SK-N-SH (cell line): ENCODE measurements at regions of chr1 and their contacts with region 1.

Region 1: DNA sequence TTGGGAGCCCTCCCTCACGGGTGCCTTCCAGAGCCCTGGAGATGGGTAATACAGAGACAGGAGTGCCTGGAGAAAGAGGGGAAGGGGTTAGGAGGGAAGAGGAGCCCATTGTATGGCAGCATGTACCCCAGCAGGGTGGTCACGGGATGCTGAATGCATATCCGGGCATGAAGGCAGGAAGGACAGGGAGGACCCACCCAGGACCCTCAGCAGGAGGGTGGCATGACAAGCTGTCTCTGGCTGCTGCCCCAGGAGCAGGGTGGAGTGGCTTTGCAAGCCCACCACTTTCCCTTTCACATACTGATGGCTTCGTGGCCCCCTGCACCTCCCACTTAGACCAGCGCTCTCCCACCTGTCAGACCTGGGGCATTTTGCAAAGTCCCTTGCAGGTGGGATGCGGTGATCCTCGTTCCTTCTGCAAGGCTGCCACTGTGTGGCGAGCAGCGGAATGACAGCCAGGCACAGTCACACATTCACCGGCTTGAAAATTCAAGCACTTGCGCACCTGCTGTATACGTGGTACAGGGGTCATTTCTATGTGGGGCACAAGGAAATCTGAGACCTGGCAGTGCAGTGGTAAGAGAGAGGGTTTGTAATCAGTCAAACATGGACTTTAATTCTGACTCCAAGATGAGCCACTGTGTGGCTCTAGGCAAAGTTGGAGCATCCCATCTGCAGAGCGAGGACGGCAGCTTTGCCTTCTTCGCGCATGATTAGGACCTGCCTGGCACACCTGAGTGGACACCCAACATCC is 53.2 kb upstream of the TMEM51 start:
- DNase-seq: peak; percentile 81
- H3K4me3 ChIP-seq: no peak overlapping the region; a peak in 1 of 4 replicates
- H3K27ac ChIP-seq: no peak overlapping the region
- H3K4me1 ChIP-seq: peaks cover 0 to 4% of the 10 kb centered on the region in 2 experiments; a peak in 1 of 4 replicates
- H3K27me3 ChIP-seq: no peaks in the 10 kb centered on the region
- CTCF ChIP-seq: peak; percentile 88
- EP300 ChIP-seq: no peak
- RAD21 ChIP-seq: peak; percentile 92

Region 2: DNA sequence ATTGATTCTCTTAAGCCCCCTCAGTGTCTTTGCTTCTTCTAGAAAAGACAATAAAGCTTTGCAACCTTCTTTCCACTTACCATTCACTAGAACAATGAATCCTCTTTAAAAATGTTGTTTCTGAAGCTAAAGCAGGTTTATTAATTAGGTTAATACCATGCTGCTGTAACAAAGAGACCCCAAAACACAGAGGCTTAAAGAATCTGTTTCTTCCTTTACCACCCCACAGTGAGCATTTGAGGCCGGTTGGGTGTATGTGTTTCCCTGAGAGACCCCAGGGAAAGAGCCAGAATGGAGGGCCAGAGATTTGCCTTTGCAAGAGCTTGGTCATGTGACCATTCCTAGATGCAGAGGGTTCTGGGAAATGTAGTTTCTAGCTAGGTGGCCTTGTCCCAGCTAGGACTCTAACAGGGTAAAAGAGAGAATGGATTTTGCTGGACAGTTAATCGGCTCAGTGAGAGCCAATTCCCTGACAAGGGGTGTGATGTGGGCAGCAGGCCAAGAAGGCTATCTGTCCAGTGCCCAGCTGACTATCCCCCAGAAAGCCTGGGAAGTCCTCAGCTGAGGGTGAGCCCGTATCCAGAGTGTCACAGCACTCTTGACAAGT is 138.5 kb before region 1 on chr1:
- CTCF ChIA-PET with region 1: no interaction called
- POLR2A ChIA-PET with region 1: no interaction called
- DNase-seq: peak; percentile 48
- H3K4me3 ChIP-seq: no peak overlapping the region
- H3K27ac ChIP-seq: no peak overlapping the region
- H3K4me1 ChIP-seq: peaks cover 0 to 8% of the 10 kb centered on the region in 2 experiments; a peak in 1 of 4 replicates
- H3K27me3 ChIP-seq: no peaks in the 10 kb centered on the region
- CTCF ChIP-seq: no peak
- EP300 ChIP-seq: no peak
- RAD21 ChIP-seq: no peak

Region 3: DNA sequence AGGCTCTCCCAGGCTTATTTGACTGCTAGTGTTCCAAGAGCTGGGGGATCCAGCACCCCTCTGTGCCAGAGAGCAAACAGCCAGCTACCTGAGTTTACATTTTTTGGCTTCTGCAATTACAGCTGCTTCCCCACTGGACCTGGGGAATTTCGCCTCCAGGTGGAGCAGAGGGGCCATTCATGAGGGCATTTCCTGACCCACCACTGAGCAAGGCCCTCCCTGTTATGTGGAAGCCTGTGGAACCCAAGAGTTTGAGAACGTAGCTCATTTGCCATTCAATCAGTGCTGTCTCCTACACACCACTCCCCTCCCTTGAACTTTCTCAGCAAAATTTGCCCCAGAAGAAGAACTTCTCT is 10.6 kb after region 1 on chr1:
- CTCF ChIA-PET with region 1: interaction called, 20 read pairs
- POLR2A ChIA-PET with region 1: no interaction called
- DNase-seq: no peak
- H3K4me3 ChIP-seq: no peak overlapping the region
- H3K27ac ChIP-seq: no peak overlapping the region
- H3K4me1 ChIP-seq: peaks cover 0 to 6% of the 10 kb centered on the region in 2 experiments; a peak in 2 of 4 replicates
- H3K27me3 ChIP-seq: no peaks in the 10 kb centered on the region
- CTCF ChIP-seq: no peak
- EP300 ChIP-seq: no peak
- RAD21 ChIP-seq: no peak

Region 4: DNA sequence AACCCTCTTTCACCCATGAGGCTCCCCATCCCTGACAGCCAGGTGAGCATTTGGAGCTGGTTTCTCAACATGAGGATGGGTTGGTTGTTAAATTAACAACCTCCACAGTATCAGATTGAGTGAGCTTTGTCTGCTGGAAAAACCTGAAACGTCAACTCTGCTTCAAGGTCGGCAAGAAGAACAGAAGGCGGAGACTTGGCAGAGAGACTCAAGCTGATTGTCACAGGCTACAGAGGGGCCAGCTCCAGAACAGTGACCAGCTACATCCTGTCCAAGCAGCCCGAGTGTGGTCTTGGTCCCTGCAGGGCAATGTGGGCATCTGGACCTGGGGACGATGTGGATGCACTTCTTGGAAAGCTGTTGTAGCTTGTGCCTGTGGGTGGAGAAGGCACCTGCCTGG is 16.7 kb after region 1 on chr1:
- CTCF ChIA-PET with region 1: interaction called, 20 read pairs
- POLR2A ChIA-PET with region 1: no interaction called
- DNase-seq: peak; percentile 67
- H3K4me3 ChIP-seq: no peak overlapping the region
- H3K27ac ChIP-seq: no peak overlapping the region; a peak in 1 of 4 replicates
- H3K4me1 ChIP-seq: peaks cover 0 to 15% of the 10 kb centered on the region in 2 experiments; a peak in 2 of 4 replicates
- H3K27me3 ChIP-seq: no peaks in the 10 kb centered on the region; the same call in 1 of the 2 replicates
- CTCF ChIP-seq: no peak
- EP300 ChIP-seq: no peak
- RAD21 ChIP-seq: no peak